CD14-positive monocyte (primary cell): ENCODE measurements at regions of chr11 and their contacts with region 1.

Region 1: DNA sequence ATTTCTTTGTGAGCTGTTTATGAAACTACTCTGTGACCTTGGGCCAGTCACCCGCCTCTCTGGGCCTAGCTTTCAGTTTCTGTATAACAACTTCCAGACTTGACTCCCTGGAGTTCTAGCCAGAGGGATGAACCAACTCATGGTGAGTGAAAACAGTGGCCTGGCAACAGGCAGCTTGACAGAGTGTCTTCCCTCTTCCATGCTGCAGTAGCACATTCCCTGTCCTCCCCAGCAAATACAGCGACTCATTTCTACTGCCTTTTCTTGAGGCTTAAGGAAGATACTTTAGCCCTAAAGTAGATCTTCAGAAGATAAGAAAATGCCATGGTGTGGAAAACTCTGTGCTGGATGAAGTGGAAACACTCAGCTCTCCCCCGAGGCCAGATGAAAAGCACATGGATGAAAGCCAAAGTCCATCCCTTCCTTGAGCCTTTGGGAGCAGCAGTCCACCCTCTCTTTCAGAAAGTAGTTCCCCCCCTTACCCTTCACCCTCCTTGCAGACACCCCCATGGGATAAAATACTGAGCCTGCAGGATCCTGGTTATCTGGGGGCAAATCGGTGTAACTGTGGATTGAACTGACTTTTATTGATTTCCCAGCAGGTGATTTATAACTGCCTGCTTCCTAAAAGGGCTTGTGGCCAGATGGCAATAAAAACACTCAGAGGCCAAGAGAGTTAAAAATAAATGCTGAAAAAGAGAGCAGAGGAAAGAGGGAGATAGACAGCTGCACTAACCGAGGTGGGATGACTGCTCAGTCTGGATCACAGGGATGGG is 24.1 kb downstream of the IRAG1 start:
- DNase-seq: no peak
- H3K4me3 ChIP-seq: no peak overlapping the region
- H3K4me3 Mint-ChIP-seq: no peak overlapping the region
- H3K27ac ChIP-seq: no peak overlapping the region
- H3K27ac Mint-ChIP-seq: no peak overlapping the region
- H3K4me1 ChIP-seq: peaks cover 16 to 17% of the 10 kb centered on the region in 2 donors
- H3K4me1 Mint-ChIP-seq: peaks cover 12% of the 10 kb centered on the region
- H3K27me3 ChIP-seq: no peaks in the 10 kb centered on the region
- H3K27me3 Mint-ChIP-seq: peaks cover 3 to 7% (median 5%) of the 10 kb centered on the region in 3 donors
- CTCF ChIP-seq: no peak

Region 2: DNA sequence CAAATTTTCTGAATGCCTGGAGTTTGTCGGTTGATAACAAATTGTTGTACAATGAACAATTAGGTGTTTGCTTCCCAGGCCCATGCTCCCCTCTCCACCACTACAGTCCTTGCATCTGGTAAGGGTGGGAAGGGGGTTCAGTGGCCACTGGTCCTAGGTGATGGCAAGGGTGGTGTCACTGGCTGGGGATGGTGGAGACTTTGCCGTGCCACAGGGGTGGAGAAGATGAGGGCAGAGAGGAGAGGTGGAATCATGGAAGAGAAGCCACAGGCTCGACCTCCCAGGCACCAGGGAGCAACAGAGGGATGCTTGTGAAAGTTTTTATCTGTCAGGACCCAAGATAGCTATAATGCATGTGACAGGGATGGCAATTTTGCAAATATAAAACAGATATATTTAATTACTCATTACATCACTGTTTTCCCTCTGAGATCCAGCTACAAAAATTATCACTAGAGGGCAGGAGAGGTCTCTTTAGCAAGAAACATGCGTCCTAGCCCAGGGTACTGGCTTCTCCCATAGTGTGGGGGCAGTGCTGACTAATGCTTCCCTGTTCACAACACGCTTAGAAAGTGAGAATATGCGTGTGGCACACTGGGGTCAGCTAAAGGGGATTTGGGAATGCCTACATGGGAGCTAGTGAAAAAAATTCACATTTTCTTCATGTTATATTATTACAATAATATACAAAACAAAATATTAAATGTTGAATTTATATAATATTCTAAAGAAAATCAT is 263.4 kb before region 1 on chr11:
- intact Hi-C with region 1: loop called in 1 of 2 experiments (anchors 10 kb)
- DNase-seq: peak; percentile 63 to 87 (median 83)
- H3K4me3 ChIP-seq: no peak overlapping the region
- H3K4me3 Mint-ChIP-seq: no peak overlapping the region
- H3K27ac ChIP-seq: no peak overlapping the region
- H3K27ac Mint-ChIP-seq: peak overlapping the region in 1 of 7 donors; percentile 75
- H3K4me1 ChIP-seq: peaks cover 40 to 45% of the 10 kb centered on the region in 2 donors
- H3K4me1 Mint-ChIP-seq: peaks cover 47% of the 10 kb centered on the region
- H3K27me3 ChIP-seq: no peaks in the 10 kb centered on the region
- H3K27me3 Mint-ChIP-seq: peaks cover 0 to 5% (median 3%) of the 10 kb centered on the region in 3 donors
- CTCF ChIP-seq: peak; percentile 84

Region 3: GRCh38 chr11:10725114-10725906 is 55.9 kb after region 1 on chr11:
- intact Hi-C with region 1: loop called in 1 of 2 experiments (anchors 10 kb)
- DNase-seq: peak; percentile 89 to 95 (median 95)
- H3K4me3 ChIP-seq: peak overlapping the region in 1 of 3 experiments; percentile 43
- H3K4me3 Mint-ChIP-seq: peak overlapping the region in 1 of 2 donors; percentile 68
- H3K27ac ChIP-seq: peak overlapping the region in 1 of 2 donors; percentile 61
- H3K27ac Mint-ChIP-seq: peak overlapping the region; percentile 33 to 89 (median 85)
- H3K4me1 ChIP-seq: peaks cover 33 to 38% of the 10 kb centered on the region in 2 donors
- H3K4me1 Mint-ChIP-seq: peaks cover 35% of the 10 kb centered on the region
- H3K27me3 ChIP-seq: peaks cover 44 to 60% of the 10 kb centered on the region in 2 donors
- H3K27me3 Mint-ChIP-seq: peaks cover 67 to 86% (median 68%) of the 10 kb centered on the region in 3 donors
- CTCF ChIP-seq: no peak